ENCODE measurements at regions of chr15 and their contacts with region 1.

Region 1: DNA sequence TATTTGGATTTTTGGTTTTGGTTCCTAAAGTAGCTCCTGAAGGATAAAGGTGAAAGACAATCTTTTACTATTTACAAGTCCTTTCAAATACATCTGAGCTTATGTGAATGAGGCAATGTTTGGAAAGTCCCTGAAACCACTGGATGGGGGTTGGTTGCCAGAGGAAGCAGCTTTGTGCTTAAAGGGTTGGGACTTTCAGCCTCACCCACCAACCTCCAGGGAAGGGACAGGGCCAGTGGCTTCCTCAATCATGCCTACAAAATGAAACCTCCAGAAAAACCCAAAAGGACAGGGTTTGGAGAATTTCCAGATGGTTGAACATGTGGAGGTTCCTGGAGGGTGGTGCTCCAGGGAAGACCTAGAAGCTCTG is 20.9 kb upstream of the ABHD17C start:
- DNase-seq: no peak
- ATAC-seq: no peak
- H3K4me3 ChIP-seq: no peak overlapping the region
- H3K4me3 Mint-ChIP-seq: no peak overlapping the region
- H3K27ac ChIP-seq: no peak overlapping the region
- H3K27ac Mint-ChIP-seq: no peak overlapping the region
- H3K4me1 ChIP-seq: no peaks in the 10 kb centered on the region
- H3K4me1 Mint-ChIP-seq: no peaks in the 10 kb centered on the region
- H3K27me3 ChIP-seq: peaks cover 0 to 4% (median 0%) of the 10 kb centered on the region in 4 experiments
- H3K27me3 Mint-ChIP-seq: peaks cover 22% of the 10 kb centered on the region
- CTCF ChIP-seq: no peak

Region 2: GRCh38 chr15:80404716-80405553 is 269.3 kb before region 1 on chr15:
- CTCF ChIA-PET with region 1: no interaction called
- POLR2A ChIA-PET with region 1: interaction called, 12 read pairs
- intact Hi-C with region 1: no loop called
- DNase-seq: peak; percentile 3
- ATAC-seq: no peak
- H3K4me3 ChIP-seq: no peak overlapping the region
- H3K4me3 Mint-ChIP-seq: peak overlapping the region; percentile 65
- H3K27ac ChIP-seq: no peak overlapping the region
- H3K27ac Mint-ChIP-seq: no peak overlapping the region
- H3K4me1 ChIP-seq: no peaks in the 10 kb centered on the region
- H3K4me1 Mint-ChIP-seq: peaks cover 8% of the 10 kb centered on the region
- H3K27me3 ChIP-seq: peaks cover 0 to 50% (median 25%) of the 10 kb centered on the region in 4 experiments
- H3K27me3 Mint-ChIP-seq: peaks cover 73% of the 10 kb centered on the region
- CTCF ChIP-seq: no peak

Region 3: GRCh38 chr15:80710635-80711554 is 36.7 kb after region 1 on chr15:
- CTCF ChIA-PET with region 1: no interaction called
- POLR2A ChIA-PET with region 1: no interaction called
- intact Hi-C with region 1: no loop called
- DNase-seq: no peak
- ATAC-seq: no peak
- H3K4me3 ChIP-seq: no peak overlapping the region
- H3K4me3 Mint-ChIP-seq: no peak overlapping the region
- H3K27ac ChIP-seq: no peak overlapping the region
- H3K27ac Mint-ChIP-seq: no peak overlapping the region
- H3K4me1 ChIP-seq: no peaks in the 10 kb centered on the region
- H3K4me1 Mint-ChIP-seq: no peaks in the 10 kb centered on the region
- H3K27me3 ChIP-seq: no peaks in the 10 kb centered on the region
- H3K27me3 Mint-ChIP-seq: no peaks in the 10 kb centered on the region
- CTCF ChIP-seq: no peak

Measured in B cell (primary cell).